Esophagus squamous epithelium (tissue), 5 donors: ENCODE measurements at regions of chr7 and their contacts with region 1.

Region 1: GRCh38 chr7:76509931-76510877 is at the start of gene UPK3B:
- DNase-seq: no peak
- H3K4me3 ChIP-seq: peak within 1 kb of the TSS in 3 of 4 donors; percentile 6 to 22 (median 9)
- H3K27ac ChIP-seq: peak within 1 kb of the TSS; percentile 41 to 67 (median 60)
- H3K4me1 ChIP-seq: peaks cover 13 to 34% (median 20%) of the 10 kb centered on the region in 3 donors
- H3K27me3 ChIP-seq: no peaks in the 10 kb centered on the region
- CTCF ChIP-seq: peak in 1 of 6 experiments; percentile 9
- POLR2A ChIP-seq: no peak
- total RNA-seq, gene UPK3B: 9.2 to 34.9 (median 23.8) TPM

Region 2: GRCh38 chr7:76997381-76997780 is 487.2 kb after region 1 on chr7:
- intact Hi-C with region 1: loop called (anchors 10 kb)
- DNase-seq: no peak
- H3K4me3 ChIP-seq: no peak overlapping the region
- H3K27ac ChIP-seq: peak overlapping the region in 2 of 4 donors; percentile 1 to 5
- H3K4me1 ChIP-seq: peaks cover 0 to 15% (median 0%) of the 10 kb centered on the region in 3 donors
- H3K27me3 ChIP-seq: no peaks in the 10 kb centered on the region
- CTCF ChIP-seq: no peak
- POLR2A ChIP-seq: no peak

Region 3: DNA sequence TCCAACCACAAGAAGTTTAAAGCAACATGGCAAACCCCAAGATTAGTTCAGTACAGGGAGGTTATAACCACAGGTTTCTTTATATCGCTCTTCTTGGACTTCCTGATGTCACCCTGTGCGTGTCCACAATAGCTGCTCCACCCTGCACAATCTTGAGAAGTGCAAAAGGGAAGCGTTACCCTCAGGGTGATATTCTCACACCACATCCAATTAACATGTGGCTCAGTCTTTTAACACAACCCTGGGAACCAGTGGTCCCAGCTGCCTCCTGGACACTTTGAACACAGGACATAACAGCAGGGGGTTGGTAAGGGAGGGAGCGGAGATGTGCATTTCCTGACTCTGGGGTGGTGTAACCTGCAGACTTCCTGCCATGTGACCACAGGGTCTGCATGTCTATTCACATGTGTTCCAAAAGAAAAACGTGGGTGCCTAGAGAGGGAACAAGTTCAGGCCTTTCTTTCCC is 841.4 kb after region 1 on chr7:
- intact Hi-C with region 1: no loop called
- DNase-seq: no peak
- H3K4me3 ChIP-seq: no peak overlapping the region
- H3K27ac ChIP-seq: peak overlapping the region in 2 of 4 donors; percentile 7 to 34
- H3K4me1 ChIP-seq: peaks cover 0 to 24% (median 0%) of the 10 kb centered on the region in 3 donors
- H3K27me3 ChIP-seq: no peaks in the 10 kb centered on the region
- CTCF ChIP-seq: no peak
- POLR2A ChIP-seq: no peak